Heart left ventricle (tissue), 16 donors: ENCODE measurements at regions of chr17 and their contacts with region 1.

Region 1: DNA sequence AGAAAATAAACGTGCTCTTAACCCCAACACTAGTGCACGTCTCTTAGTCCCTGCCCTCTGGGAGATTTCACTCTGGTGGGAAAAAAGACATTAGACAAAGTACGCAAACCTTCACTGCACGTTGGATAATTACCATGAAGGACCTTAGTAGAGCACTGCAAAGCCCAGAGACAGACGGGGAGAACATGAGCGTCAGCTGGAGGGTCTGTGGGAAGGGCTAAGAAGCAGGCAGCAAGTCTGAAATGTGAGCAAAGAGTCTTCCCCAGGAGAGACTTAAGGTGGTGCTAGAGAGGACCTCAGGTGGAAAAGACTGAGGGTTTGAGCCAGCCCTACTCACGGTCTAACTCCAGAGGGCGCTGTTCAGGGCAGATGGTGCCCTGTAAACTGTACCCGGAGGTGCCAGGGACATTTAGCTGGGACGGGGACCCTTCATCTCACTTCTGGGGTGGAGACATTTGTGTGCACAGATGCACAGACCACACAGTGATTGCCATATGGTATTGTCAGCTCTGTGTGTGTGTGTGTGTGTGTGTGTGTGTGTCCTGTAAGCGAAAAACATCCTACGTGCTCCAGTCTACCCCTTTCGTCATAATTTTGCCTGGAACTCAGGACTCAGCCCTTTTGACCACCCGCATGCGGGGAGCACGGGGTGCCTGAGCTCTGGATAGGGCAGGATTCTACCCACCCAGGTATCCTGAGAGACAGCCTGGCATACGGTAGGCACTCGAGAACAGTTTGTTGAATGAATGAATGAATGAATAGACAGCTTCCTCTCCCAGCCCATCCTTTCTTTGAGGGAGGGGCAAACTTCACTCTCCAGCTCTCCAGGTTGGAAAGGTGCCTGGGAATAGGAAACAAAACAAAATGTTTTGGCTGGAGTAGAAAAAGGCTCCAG is 10.1 kb upstream of the STAC2 start:
- DNase-seq: peak in 1 of 5 donors; percentile 20
- ATAC-seq: peak in 3 of 4 donors; percentile 29 to 45 (median 31)
- H3K4me3 ChIP-seq: no peak overlapping the region
- H3K27ac ChIP-seq: no peak overlapping the region
- H3K4me1 ChIP-seq: peaks cover 0 to 27% (median 8%) of the 10 kb centered on the region in 12 donors
- H3K27me3 ChIP-seq: peaks cover 0 to 53% (median 14%) of the 10 kb centered on the region in 9 donors
- CTCF ChIP-seq: peak in 11 of 12 donors; percentile 18 to 57 (median 39)
- POLR2A ChIP-seq: no peak

Region 2: GRCh38 chr17:38982858-38983746 is 252.7 kb before region 1 on chr17:
- intact Hi-C with region 1: loop called in 7 of 10 experiments (anchors 5 to 10 kb)
- DNase-seq: peak in 3 of 5 donors; percentile 39 to 54 (median 42)
- ATAC-seq: peak in 3 of 4 donors; percentile 69 to 79 (median 76)
- H3K4me3 ChIP-seq: no peak overlapping the region
- H3K27ac ChIP-seq: peak overlapping the region in 5 of 12 donors; percentile 8 to 75 (median 59)
- H3K4me1 ChIP-seq: peaks cover 0 to 19% (median 0%) of the 10 kb centered on the region in 12 donors
- H3K27me3 ChIP-seq: no peaks in the 10 kb centered on the region
- CTCF ChIP-seq: peak; percentile 66 to 88 (median 82)
- POLR2A ChIP-seq: no peak

Region 3: DNA sequence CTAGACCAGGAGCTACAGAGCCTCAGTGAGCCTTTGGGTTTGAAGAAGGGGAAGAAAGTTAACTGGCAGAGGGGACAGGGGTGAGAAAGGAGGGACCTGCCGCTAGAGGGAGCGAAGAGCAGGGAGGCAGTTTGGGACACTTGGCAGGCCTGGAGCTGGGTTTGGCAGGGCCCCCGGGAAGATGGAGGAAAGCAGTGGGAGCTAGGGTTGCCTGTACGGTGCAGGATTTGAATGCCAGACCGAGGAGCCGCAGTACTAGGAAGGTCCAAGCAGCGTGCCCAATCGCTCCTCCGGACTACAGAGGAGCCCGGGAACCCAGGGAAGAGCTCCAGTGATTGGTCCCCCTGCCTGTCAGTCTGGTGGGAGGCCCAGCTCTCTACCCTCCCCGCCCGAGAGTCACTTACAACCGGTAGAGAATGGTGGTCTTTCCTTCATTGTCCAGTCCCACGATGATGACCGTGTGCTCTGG is 71.1 kb before region 1 on chr17:
- intact Hi-C with region 1: loop called in 2 of 10 experiments (anchors 10 kb)
- DNase-seq: peak; percentile 90 to 94 (median 93)
- ATAC-seq: peak; percentile 83 to 95 (median 92)
- H3K4me3 ChIP-seq: peak overlapping the region; percentile 40 to 68 (median 58)
- H3K27ac ChIP-seq: peak overlapping the region in 6 of 12 donors; percentile 19 to 65 (median 44)
- H3K4me1 ChIP-seq: peaks cover 0 to 51% (median 26%) of the 10 kb centered on the region in 12 donors
- H3K27me3 ChIP-seq: no peaks in the 10 kb centered on the region
- CTCF ChIP-seq: peak; percentile 70 to 87 (median 80)
- POLR2A ChIP-seq: peak in 1 of 2 donors; percentile 35

Region 4: DNA sequence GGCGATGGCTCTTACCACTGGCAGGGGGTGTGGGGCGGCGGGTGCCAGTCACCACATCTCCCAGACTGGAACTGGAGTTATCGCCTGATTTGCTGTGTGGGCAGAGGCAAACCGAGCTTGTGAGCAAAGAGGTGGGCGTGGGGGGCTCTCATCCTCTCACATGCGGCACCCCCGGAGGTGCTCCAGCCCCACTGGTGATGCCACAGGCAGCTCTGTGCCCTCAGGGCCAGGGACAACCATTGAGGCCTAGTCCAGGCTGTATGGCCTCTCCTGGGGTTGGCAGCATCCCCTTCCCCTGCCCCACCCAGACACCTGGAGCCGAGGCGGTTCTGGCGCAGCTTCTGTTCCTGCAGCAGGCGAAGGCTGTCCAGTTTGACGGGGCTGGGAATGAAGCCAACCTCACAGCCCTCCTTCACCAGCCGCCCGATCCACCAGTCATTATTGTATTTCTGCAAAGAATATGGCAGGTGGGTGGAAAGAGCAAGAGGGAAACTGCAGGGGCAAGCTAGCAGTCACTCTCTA is 49.3 kb before region 1 on chr17:
- intact Hi-C with region 1: loop called in 2 of 10 experiments (anchors 5 to 10 kb)
- DNase-seq: no peak
- ATAC-seq: no peak
- H3K4me3 ChIP-seq: no peak overlapping the region
- H3K27ac ChIP-seq: no peak overlapping the region
- H3K4me1 ChIP-seq: no peaks in the 10 kb centered on the region
- H3K27me3 ChIP-seq: no peaks in the 10 kb centered on the region
- CTCF ChIP-seq: no peak
- POLR2A ChIP-seq: no peak

Region 5: DNA sequence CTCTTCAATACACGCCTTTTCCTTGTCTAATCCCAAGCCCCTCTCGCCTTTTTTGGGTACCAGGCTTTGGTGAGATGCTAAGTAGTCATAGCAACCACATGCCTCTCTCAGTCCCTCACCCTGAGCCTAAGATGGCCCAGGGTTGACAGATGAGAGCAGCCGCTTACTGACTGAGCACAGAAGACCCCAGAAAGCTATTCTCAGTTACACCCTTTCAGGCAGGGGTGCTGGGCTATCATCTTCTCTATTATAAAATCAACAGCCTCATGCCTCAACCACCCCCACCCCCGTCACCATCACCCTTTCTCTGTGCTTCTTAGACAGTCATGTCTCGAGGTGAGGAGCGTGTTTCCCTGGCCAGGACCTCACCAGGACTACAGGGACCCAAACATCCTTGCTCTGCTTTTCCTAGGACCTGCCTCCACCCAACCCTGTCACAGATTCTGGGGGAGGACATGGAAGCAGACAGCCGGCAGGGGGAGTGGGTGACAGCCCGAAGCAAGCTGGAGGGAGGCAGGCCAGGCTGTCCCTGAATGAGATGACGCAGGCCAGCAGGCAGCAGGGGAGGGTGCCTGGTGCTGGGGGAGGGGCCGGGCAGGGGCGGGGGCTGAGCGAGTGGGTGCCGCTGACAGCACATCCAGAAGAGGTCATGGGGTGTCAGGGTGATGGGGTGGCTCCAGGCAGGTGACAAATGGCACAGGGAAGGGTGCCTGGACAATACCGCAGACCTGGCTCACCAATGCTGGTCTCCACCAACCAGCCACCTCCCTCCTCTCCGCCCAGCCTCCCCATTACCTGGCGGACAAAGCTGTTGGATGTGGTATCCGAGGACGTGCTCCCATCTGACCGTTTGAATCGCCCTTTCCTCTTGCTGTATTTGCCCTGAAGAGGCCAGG is 41.5 kb before region 1 on chr17:
- intact Hi-C with region 1: loop called in 2 of 10 experiments (anchors 5 to 10 kb)
- DNase-seq: peak in 4 of 5 donors; percentile 70 to 83 (median 77)
- ATAC-seq: peak in 3 of 4 donors; percentile 70 to 81 (median 73)
- H3K4me3 ChIP-seq: no peak overlapping the region
- H3K27ac ChIP-seq: peak overlapping the region in 2 of 12 donors; percentile 8 to 14
- H3K4me1 ChIP-seq: peaks cover 0 to 42% (median 22%) of the 10 kb centered on the region in 12 donors
- H3K27me3 ChIP-seq: no peaks in the 10 kb centered on the region
- CTCF ChIP-seq: peak in 11 of 12 donors; percentile 12 to 61 (median 39)
- POLR2A ChIP-seq: no peak

Region 6: GRCh38 chr17:39209317-39210092 is 26.3 kb before region 1 on chr17:
- intact Hi-C with region 1: loop called in 7 of 10 experiments (anchors 1 to 5 kb)
- DNase-seq: peak; percentile 72 to 90 (median 79)
- ATAC-seq: peak; percentile 49 to 86 (median 79)
- H3K4me3 ChIP-seq: peak overlapping the region; percentile 20 to 59 (median 48)
- H3K27ac ChIP-seq: peak overlapping the region in 7 of 12 donors; percentile 20 to 78 (median 49)
- H3K4me1 ChIP-seq: peaks cover 3 to 23% (median 12%) of the 10 kb centered on the region in 12 donors
- H3K27me3 ChIP-seq: peaks cover 0 to 9% (median 0%) of the 10 kb centered on the region in 9 donors
- CTCF ChIP-seq: no peak
- POLR2A ChIP-seq: peak in 1 of 2 donors; percentile 42